Activated CD4-positive, alpha-beta T cell treated with anti-CD3 and anti-CD28 coated beads for 36 hours (primary cell): ENCODE measurements at regions of chr1 and their contacts with region 1.

Region 1: DNA sequence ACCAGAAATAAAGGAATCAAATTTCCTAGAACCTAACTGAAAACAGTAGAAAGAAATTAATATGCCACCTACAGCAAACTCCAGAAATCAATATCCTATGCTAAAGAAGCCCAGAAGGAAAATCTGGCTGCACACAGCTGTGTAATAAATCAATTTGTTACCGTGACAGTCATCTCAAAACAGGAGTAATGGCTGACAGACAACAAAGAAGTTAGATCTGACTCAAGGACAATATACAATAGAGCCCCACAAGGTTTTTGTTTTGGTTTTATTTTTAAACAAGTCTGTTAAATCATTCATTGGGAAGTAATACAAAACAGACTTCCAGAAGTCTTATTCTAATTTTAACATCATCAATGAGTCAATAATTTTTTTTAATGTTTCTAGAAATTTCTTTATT is 168.4 kb downstream of the RERE start:
- DNase-seq: peak; percentile 22
- ATAC-seq: peak; percentile 85
- H3K4me3 Mint-ChIP-seq: no peak overlapping the region
- H3K27ac Mint-ChIP-seq: peak overlapping the region; percentile 37
- H3K4me1 Mint-ChIP-seq: peaks cover 50% of the 10 kb centered on the region
- H3K27me3 Mint-ChIP-seq: no peaks in the 10 kb centered on the region

Region 2: DNA sequence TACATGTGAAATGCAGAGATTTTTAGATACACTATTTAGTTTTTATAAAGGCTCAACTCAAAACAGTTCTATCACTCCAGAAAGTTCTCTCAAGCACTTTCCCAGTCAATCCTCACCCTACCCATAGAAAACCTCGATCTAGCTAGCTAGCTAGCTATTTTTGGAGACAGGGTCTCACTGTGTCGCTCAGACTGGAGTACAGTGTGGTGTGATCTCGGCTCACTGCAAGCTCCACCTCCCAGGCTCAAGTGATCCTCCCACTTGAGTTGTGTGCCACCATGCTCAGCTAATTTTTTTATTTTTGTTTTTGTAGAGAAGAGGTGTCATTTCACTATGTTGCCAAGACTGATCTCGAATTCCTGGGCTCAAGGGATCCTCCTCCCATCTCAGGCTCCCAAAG is 68.5 kb before region 1 on chr1:
- CTCF ChIA-PET with region 1: no interaction called
- POLR2A ChIA-PET with region 1: no interaction called
- intact Hi-C with region 1: no loop called
- DNase-seq: no peak
- ATAC-seq: no peak
- H3K4me3 Mint-ChIP-seq: no peak overlapping the region
- H3K27ac Mint-ChIP-seq: no peak overlapping the region
- H3K4me1 Mint-ChIP-seq: no peaks in the 10 kb centered on the region
- H3K27me3 Mint-ChIP-seq: no peaks in the 10 kb centered on the region

Region 3: GRCh38 chr1:8629241-8630091 is 19.6 kb before region 1 on chr1:
- CTCF ChIA-PET with region 1: interaction called, 4 read pairs
- POLR2A ChIA-PET with region 1: no interaction called
- intact Hi-C with region 1: loop called in 1 of 2 experiments (anchors 2 kb)
- DNase-seq: peak; percentile 29
- ATAC-seq: peak; percentile 91
- H3K4me3 Mint-ChIP-seq: no peak overlapping the region
- H3K27ac Mint-ChIP-seq: peak overlapping the region; percentile 38
- H3K4me1 Mint-ChIP-seq: peaks cover 50% of the 10 kb centered on the region
- H3K27me3 Mint-ChIP-seq: no peaks in the 10 kb centered on the region

Region 4: DNA sequence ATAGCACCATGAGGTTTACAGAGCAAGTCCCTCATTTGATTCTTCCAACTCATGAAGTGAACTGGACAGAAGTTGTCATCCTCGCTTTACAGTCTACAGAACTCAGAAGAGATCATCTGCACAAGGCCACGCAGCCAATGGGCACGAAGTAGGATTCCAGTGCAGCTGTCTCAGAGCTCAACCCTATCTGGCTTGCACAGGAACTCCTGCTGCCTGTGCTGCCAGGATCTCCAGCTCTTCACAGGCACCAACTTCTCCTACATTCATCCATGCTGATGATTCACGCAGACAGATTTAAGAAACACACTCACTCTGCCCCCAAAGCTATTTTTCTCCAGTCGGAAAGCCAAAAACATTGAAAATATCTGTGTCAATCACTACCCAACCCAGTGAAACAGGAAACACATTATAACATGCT is 11.4 kb after region 1 on chr1:
- CTCF ChIA-PET with region 1: interaction called, 14 read pairs
- POLR2A ChIA-PET with region 1: no interaction called
- intact Hi-C with region 1: loop called (anchors 1 kb)
- DNase-seq: peak; percentile 24
- ATAC-seq: no peak
- H3K4me3 Mint-ChIP-seq: no peak overlapping the region
- H3K27ac Mint-ChIP-seq: no peak overlapping the region
- H3K4me1 Mint-ChIP-seq: peaks cover 4% of the 10 kb centered on the region
- H3K27me3 Mint-ChIP-seq: no peaks in the 10 kb centered on the region

Region 5: DNA sequence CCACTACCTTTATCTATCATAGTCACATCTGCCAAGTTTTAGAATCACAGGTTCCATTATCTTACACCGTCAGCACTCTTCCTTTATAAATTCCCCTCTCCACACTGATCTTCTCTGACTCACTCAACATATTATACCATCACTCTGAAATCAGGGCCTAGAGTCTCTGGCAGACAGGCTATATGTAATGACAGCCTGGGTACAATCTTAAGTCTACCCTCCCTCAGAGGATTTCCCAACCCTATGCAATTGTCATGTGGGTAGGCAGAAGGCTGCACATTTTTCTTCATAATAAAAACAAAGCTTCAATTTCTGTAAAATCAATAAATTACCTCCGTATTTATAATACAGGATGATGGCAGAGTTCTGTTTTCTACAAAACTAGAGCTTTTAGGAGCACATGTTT is 30.4 kb after region 1 on chr1:
- CTCF ChIA-PET with region 1: no interaction called
- POLR2A ChIA-PET with region 1: interaction called, 3 read pairs
- intact Hi-C with region 1: loop called (anchors 1 kb)
- DNase-seq: no peak
- ATAC-seq: peak; percentile 95
- H3K4me3 Mint-ChIP-seq: no peak overlapping the region
- H3K27ac Mint-ChIP-seq: no peak overlapping the region
- H3K4me1 Mint-ChIP-seq: peaks cover 33% of the 10 kb centered on the region
- H3K27me3 Mint-ChIP-seq: no peaks in the 10 kb centered on the region